ENCODE measurements at regions of chr3 and their contacts with region 1.

Region 1: GRCh38 chr3:9503283-9503682 is 50.3 kb downstream of the LHFPL4 start:
- DNase-seq: peak; percentile 51 to 64 (median 60)
- H3K4me3 ChIP-seq: no peak overlapping the region
- H3K4me3 Mint-ChIP-seq: no peak overlapping the region
- H3K27ac ChIP-seq: no peak overlapping the region
- H3K27ac Mint-ChIP-seq: no peak overlapping the region
- H3K4me1 ChIP-seq: peaks cover 13% of the 10 kb centered on the region
- H3K4me1 Mint-ChIP-seq: peaks cover 2 to 14% (median 6%) of the 10 kb centered on the region in 4 donors
- H3K27me3 ChIP-seq: peaks cover 17% of the 10 kb centered on the region
- H3K27me3 Mint-ChIP-seq: peaks cover 20 to 26% of the 10 kb centered on the region in 2 donors

Region 2: GRCh38 chr3:9352917-9353752 is 150.1 kb before region 1 on chr3:
- CTCF ChIA-PET with region 1: interaction called, 10 read pairs
- POLR2A ChIA-PET with region 1: no interaction called
- intact Hi-C with region 1: loop called (anchors 1 kb)
- DNase-seq: peak; percentile 45 to 61 (median 55)
- H3K4me3 ChIP-seq: no peak overlapping the region
- H3K4me3 Mint-ChIP-seq: no peak overlapping the region
- H3K27ac ChIP-seq: no peak overlapping the region
- H3K27ac Mint-ChIP-seq: peak overlapping the region in 1 of 7 donors; percentile 26
- H3K4me1 ChIP-seq: no peaks in the 10 kb centered on the region
- H3K4me1 Mint-ChIP-seq: peaks cover 10 to 16% (median 13%) of the 10 kb centered on the region in 4 donors
- H3K27me3 ChIP-seq: no peaks in the 10 kb centered on the region
- H3K27me3 Mint-ChIP-seq: no peaks in the 10 kb centered on the region

Region 3: GRCh38 chr3:9491506-9491905 is 11.8 kb before region 1 on chr3:
- CTCF ChIA-PET with region 1: interaction called, 14 read pairs
- POLR2A ChIA-PET with region 1: no interaction called
- intact Hi-C with region 1: no loop called
- DNase-seq: no peak
- H3K4me3 ChIP-seq: no peak overlapping the region
- H3K4me3 Mint-ChIP-seq: no peak overlapping the region
- H3K27ac ChIP-seq: no peak overlapping the region
- H3K27ac Mint-ChIP-seq: peak overlapping the region in 2 of 7 donors; percentile 13 to 60
- H3K4me1 ChIP-seq: no peaks in the 10 kb centered on the region
- H3K4me1 Mint-ChIP-seq: peaks cover 0 to 3% (median 0%) of the 10 kb centered on the region in 4 donors
- H3K27me3 ChIP-seq: no peaks in the 10 kb centered on the region
- H3K27me3 Mint-ChIP-seq: no peaks in the 10 kb centered on the region

Region 4: GRCh38 chr3:9514956-9515355 is 11.7 kb after region 1 on chr3:
- CTCF ChIA-PET with region 1: interaction called, 18 read pairs
- POLR2A ChIA-PET with region 1: no interaction called
- intact Hi-C with region 1: no loop called
- DNase-seq: no peak
- H3K4me3 ChIP-seq: no peak overlapping the region
- H3K4me3 Mint-ChIP-seq: no peak overlapping the region
- H3K27ac ChIP-seq: no peak overlapping the region
- H3K27ac Mint-ChIP-seq: no peak overlapping the region
- H3K4me1 ChIP-seq: no peaks in the 10 kb centered on the region
- H3K4me1 Mint-ChIP-seq: peaks cover 0 to 1% (median 0%) of the 10 kb centered on the region in 4 donors
- H3K27me3 ChIP-seq: no peaks in the 10 kb centered on the region
- H3K27me3 Mint-ChIP-seq: peaks cover 9 to 12% of the 10 kb centered on the region in 2 donors